ENCODE measurements at regions of chr1 and their contacts with region 1.

Region 1: GRCh38 chr1:224127925-224128819 is 14.3 kb downstream of the FBXO28 start:
- DNase-seq: peak in 1 of 2 experiments; percentile 56
- H3K4me3 ChIP-seq: no peak overlapping the region
- H3K27ac ChIP-seq: peak overlapping the region; percentile 36
- H3K4me1 ChIP-seq: peaks cover 15% of the 10 kb centered on the region; the same call in 1 of the 2 replicates
- H3K27me3 ChIP-seq: no peaks in the 10 kb centered on the region
- CTCF ChIP-seq: no peak

Region 2: DNA sequence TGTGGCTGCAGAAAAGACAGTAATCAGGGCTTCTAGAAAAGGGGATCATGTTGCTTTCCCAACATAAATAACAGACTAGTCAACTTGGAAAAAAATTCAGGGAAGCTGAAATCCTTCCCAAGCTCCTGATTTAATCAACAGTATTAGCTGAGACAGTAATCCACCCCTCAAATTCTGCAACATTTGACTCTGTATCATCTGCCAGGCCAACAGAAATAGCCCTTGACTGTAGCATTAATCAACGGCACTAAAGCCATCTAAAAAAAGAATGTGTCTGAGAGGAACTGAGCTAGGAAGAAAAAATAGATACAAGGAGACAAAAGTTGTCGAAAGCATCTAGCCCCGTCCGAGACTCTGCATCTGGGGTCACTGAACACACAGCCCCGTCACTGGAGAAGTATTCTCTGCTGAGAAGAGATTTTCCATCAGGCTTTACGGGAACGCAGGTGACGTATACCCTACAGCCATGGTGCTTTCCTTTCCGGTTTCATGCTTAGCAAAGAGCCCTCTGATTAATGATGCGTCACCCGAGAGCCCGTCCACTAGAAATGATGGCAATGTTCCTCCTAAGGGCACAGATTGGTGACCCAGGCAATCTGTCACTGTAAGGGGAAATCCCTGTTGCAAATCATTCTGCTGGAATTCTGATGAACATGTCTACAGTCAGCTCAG is 240.3 kb before region 1 on chr1:
- CTCF ChIA-PET with region 1: no interaction called
- POLR2A ChIA-PET with region 1: no interaction called
- intact Hi-C with region 1: no loop called
- DNase-seq: peak; percentile 87 to 99
- H3K4me3 ChIP-seq: peak overlapping the region; percentile 42; the same call in 1 of the 2 replicates
- H3K27ac ChIP-seq: peak overlapping the region; percentile 94
- H3K4me1 ChIP-seq: peaks cover 36% of the 10 kb centered on the region
- H3K27me3 ChIP-seq: no peaks in the 10 kb centered on the region
- CTCF ChIP-seq: no peak

Region 3: GRCh38 chr1:224141693-224142092 is 13.5 kb after region 1 on chr1:
- CTCF ChIA-PET with region 1: no interaction called
- POLR2A ChIA-PET with region 1: no interaction called
- intact Hi-C with region 1: no loop called
- DNase-seq: no peak
- H3K4me3 ChIP-seq: no peak overlapping the region
- H3K27ac ChIP-seq: no peak overlapping the region
- H3K4me1 ChIP-seq: no peaks in the 10 kb centered on the region
- H3K27me3 ChIP-seq: no peaks in the 10 kb centered on the region
- CTCF ChIP-seq: no peak

Region 4: DNA sequence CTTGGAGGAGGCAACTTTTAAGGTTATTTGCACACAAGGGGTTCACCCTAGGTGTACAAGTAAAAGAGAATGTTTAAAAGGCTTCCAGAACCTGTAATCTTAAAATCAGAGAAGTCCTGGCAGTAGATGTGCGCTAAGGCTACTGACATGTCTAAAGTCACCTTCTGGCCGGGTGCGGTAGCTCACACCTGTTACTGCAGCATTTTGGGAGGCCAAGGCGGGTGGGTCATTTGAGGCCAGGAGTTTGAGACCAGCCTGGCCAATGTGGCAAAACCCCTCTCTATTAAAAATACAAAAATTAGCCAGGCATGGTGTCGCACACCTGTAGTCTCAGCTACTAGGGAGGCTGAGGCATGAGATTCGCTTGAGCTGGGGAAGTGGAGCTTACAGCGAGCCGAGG is 34.6 kb after region 1 on chr1:
- CTCF ChIA-PET with region 1: no interaction called
- POLR2A ChIA-PET with region 1: interaction called, 11 read pairs
- intact Hi-C with region 1: no loop called
- DNase-seq: no peak
- H3K4me3 ChIP-seq: no peak overlapping the region
- H3K27ac ChIP-seq: no peak overlapping the region
- H3K4me1 ChIP-seq: no peaks in the 10 kb centered on the region
- H3K27me3 ChIP-seq: no peaks in the 10 kb centered on the region
- CTCF ChIP-seq: no peak

Region 5: GRCh38 chr1:224175617-224176016 is 47.4 kb after region 1 on chr1:
- CTCF ChIA-PET with region 1: no interaction called
- POLR2A ChIA-PET with region 1: no interaction called
- intact Hi-C with region 1: no loop called
- DNase-seq: no peak
- H3K4me3 ChIP-seq: no peak overlapping the region
- H3K27ac ChIP-seq: no peak overlapping the region
- H3K4me1 ChIP-seq: 0 out of 2 replicates have a peak, but pooled peaks cover under 1% of the 10 kb centered on the region
- H3K27me3 ChIP-seq: no peaks in the 10 kb centered on the region
- CTCF ChIP-seq: no peak

Region 6: DNA sequence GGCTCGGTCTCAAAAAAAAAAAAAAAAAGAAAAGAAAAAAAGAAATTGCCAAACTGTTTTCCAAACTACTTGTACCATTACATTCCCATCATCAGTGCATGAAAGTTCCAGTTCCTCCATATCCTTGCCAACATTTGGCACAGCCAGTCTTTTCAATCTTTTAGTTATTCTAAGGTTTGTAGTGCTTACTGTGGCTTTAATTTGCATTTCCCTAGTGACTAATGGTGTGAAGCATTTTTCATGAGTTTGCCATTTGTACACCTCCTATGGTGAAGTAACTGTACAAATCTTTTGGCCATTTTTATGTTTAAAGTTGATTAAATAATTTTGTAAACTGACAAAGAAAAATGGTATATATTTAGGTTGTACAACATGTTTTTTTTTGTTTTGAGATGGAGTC is 125.5 kb after region 1 on chr1:
- CTCF ChIA-PET with region 1: no interaction called
- POLR2A ChIA-PET with region 1: no interaction called
- intact Hi-C with region 1: no loop called
- DNase-seq: no peak
- H3K4me3 ChIP-seq: no peak overlapping the region
- H3K27ac ChIP-seq: no peak overlapping the region
- H3K4me1 ChIP-seq: no peaks in the 10 kb centered on the region
- H3K27me3 ChIP-seq: no peaks in the 10 kb centered on the region
- CTCF ChIP-seq: no peak